Activated CD4-positive, alpha-beta memory T cell treated with anti-CD3 and anti-CD28 coated beads for 36 hours (primary cell): ENCODE measurements at regions of chr12 and their contacts with region 1.

Region 1: GRCh38 chr12:53701518-53702260 is 25.6 kb downstream of the CALCOCO1 start:
- DNase-seq: peak; percentile 84
- H3K4me3 Mint-ChIP-seq: no peak overlapping the region
- H3K27ac Mint-ChIP-seq: no peak overlapping the region
- H3K4me1 Mint-ChIP-seq: peaks cover 5% of the 10 kb centered on the region
- H3K27me3 Mint-ChIP-seq: peaks cover 62% of the 10 kb centered on the region

Region 2: DNA sequence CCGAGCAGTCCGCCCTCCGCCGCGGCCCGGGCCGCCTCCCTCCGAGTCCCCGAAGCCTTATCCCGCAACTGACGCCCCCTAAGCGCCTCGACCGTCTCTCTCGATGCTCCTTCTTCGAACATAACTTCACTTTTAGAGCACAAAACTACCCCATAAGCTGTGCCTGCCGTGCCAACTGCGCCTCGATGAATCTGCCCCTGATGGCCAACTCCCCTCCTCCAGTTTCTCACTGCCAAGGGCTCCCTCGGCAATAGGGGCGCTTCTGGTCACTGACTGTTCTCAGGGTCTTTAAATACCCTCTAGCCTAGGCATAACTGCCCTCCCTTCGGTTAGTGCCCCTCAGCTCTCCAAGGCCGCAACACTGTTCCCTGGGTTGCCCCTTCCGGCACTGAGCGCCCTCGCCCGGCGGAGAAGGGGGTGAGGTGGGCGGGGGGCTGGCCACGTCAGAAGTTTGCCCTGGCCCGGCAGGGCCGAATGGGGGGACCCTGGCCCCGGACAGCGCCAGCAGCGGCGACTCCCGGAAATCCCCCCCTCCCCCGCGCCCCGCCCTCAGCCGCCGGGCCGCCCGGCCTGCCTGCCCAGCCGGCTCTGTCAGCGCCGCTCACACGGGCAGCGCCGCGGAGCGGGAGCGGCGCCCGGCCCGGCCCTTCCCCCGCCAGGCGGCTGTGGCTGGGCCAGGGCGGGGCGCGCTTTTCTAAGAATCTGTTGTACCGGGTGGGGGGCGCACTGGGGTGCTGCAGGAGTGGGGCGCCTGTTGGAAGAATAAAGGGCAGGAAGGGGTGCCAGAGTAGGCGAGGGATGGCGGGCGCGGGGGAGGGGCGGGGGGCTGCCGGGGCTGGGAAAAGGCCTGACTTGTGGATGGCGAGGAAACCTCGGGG is 480.2 kb before region 1 on chr12:
- CTCF ChIA-PET with region 1: no interaction called
- POLR2A ChIA-PET with region 1: no interaction called
- intact Hi-C with region 1: no loop called
- DNase-seq: peak; percentile 70
- H3K4me3 Mint-ChIP-seq: peak overlapping the region; percentile 80
- H3K27ac Mint-ChIP-seq: peak overlapping the region; percentile 93
- H3K4me1 Mint-ChIP-seq: peaks cover 70% of the 10 kb centered on the region
- H3K27me3 Mint-ChIP-seq: no peaks in the 10 kb centered on the region

Region 3: GRCh38 chr12:53727310-53728041 is 25.8 kb after region 1 on chr12 and contains the start of gene CALCOCO1:
- CTCF ChIA-PET with region 1: interaction called, 19 read pairs
- POLR2A ChIA-PET with region 1: no interaction called
- intact Hi-C with region 1: no loop called
- DNase-seq: peak; percentile 99
- H3K4me3 Mint-ChIP-seq: peak within 1 kb of the TSS; percentile 87
- H3K27ac Mint-ChIP-seq: peak within 1 kb of the TSS; percentile 77
- H3K4me1 Mint-ChIP-seq: peaks cover 19% of the 10 kb centered on the region
- H3K27me3 Mint-ChIP-seq: no peaks in the 10 kb centered on the region
- total RNA-seq, gene CALCOCO1: 21.2 to 23.7 TPM

Region 4: GRCh38 chr12:53757095-53757770 is 55.5 kb after region 1 on chr12:
- CTCF ChIA-PET with region 1: interaction called, 25 read pairs
- POLR2A ChIA-PET with region 1: no interaction called
- intact Hi-C with region 1: no loop called
- DNase-seq: peak; percentile 92
- H3K4me3 Mint-ChIP-seq: peak overlapping the region; percentile 46
- H3K27ac Mint-ChIP-seq: peak overlapping the region; percentile 34
- H3K4me1 Mint-ChIP-seq: peaks cover 10% of the 10 kb centered on the region
- H3K27me3 Mint-ChIP-seq: peaks cover 36% of the 10 kb centered on the region